Heart left ventricle (tissue), 16 donors: ENCODE measurements at regions of chr21 and their contacts with region 1.

Region 1: DNA sequence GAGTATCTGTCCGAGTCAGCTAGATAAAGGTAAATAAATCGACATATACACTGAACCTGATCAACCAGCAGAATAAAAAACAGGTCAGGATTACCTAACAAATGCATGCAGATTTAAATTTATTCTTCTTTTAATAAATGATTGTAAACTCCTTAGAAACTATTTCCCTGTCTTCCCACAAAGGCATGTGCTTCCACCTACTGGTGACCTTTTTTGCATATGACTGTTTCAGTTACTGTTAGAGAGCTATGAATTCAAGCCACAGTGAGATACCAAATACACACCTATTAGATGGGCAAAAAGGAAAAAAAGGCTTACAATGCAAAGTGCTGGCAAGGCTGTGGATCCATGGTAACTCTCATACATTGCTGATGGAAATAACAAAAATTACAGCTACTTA is 957.4 kb upstream of the NCAM2 start:
- DNase-seq: no peak
- ATAC-seq: no peak
- H3K4me3 ChIP-seq: no peak overlapping the region
- H3K27ac ChIP-seq: no peak overlapping the region
- H3K4me1 ChIP-seq: no peaks in the 10 kb centered on the region
- H3K27me3 ChIP-seq: no peaks in the 10 kb centered on the region
- CTCF ChIP-seq: peak in 11 of 12 donors; percentile 21 to 50 (median 36)
- POLR2A ChIP-seq: no peak

Region 2: GRCh38 chr21:18801468-18801867 is 1239.3 kb before region 1 on chr21:
- intact Hi-C with region 1: loop called in 1 of 10 experiments (anchors 5 kb)
- DNase-seq: no peak
- ATAC-seq: peak in 2 of 4 donors; percentile 46 to 56
- H3K4me3 ChIP-seq: no peak overlapping the region
- H3K27ac ChIP-seq: no peak overlapping the region
- H3K4me1 ChIP-seq: no peaks in the 10 kb centered on the region
- H3K27me3 ChIP-seq: no peaks in the 10 kb centered on the region
- CTCF ChIP-seq: peak in 9 of 12 donors; percentile 16 to 42 (median 38)
- POLR2A ChIP-seq: no peak

Region 3: DNA sequence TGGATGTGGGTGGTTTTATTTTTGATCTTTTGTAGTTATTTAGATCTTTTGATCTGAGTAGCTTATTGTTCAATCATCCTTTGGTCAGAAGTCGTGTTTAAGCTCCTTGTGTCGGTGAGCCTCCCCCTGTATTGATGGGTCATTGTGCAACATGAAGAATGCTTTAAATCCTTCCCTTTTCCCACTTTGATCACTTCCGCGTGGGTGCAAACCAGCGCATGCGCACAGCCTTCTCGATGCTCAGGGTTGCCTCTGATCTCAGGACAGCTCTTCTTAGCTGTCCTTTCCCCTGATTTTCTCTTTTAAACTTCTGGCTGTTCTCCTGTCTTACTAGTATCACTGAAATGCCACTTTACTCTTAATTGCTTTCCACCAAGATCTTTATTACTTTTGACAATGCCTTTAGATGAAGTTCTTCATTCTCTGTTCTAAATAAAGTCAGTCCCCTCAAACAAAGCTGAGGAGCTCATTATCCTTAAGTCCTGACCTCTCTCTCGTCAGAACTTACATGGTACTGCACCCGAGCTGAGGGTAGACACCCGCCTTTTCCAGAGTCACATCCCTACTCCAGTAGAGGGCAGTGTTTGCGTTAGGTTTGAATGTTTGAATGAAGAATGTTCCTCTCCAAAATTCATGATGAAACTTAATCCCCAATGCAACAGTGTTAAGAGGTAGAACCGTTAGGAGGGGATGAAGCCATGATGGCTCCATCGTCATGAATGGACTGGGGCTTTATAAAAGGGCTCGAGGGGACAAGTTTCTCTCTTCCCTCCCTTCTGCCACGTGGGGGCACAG is 1089.3 kb before region 1 on chr21:
- intact Hi-C with region 1: loop called in 2 of 10 experiments (anchors 5 to 10 kb)
- DNase-seq: no peak
- ATAC-seq: peak in 2 of 4 donors; percentile 42 to 52
- H3K4me3 ChIP-seq: no peak overlapping the region
- H3K27ac ChIP-seq: no peak overlapping the region
- H3K4me1 ChIP-seq: no peaks in the 10 kb centered on the region
- H3K27me3 ChIP-seq: no peaks in the 10 kb centered on the region
- CTCF ChIP-seq: peak; percentile 10 to 51 (median 38)
- POLR2A ChIP-seq: no peak